Activated T-helper 1 cell treated with anti-CD3 and anti-CD28 coated beads, Interleukin-12 subunit alpha, Interleukin-12 subunit beta, Interleukin-2, Interleukin-4 antibody, amounts not matched to agents 30 ng/mL and 10 ng/mL and 1 ng/mL, durations not matched to agents 14 hours and 24 hours and 36 hours (primary cell): ENCODE measurements at regions of chr1 and their contacts with region 1.

Region 1: GRCh38 chr1:116737020-116737854 is 17.0 kb upstream of the CD2 start:
- DNase-seq: peak; percentile 70
- H3K4me3 Mint-ChIP-seq: peak overlapping the region; percentile 66
- H3K27ac Mint-ChIP-seq: peak overlapping the region; percentile 99
- H3K4me1 Mint-ChIP-seq: peaks cover 79% of the 10 kb centered on the region
- H3K27me3 Mint-ChIP-seq: no peaks in the 10 kb centered on the region

Region 2: GRCh38 chr1:116724765-116725375 is 12.4 kb before region 1 on chr1:
- intact Hi-C with region 1: loop called (anchors 1 kb)
- DNase-seq: peak; percentile 64
- H3K4me3 Mint-ChIP-seq: no peak overlapping the region
- H3K27ac Mint-ChIP-seq: no peak overlapping the region
- H3K4me1 Mint-ChIP-seq: peaks cover 43% of the 10 kb centered on the region
- H3K27me3 Mint-ChIP-seq: no peaks in the 10 kb centered on the region

Region 3: DNA sequence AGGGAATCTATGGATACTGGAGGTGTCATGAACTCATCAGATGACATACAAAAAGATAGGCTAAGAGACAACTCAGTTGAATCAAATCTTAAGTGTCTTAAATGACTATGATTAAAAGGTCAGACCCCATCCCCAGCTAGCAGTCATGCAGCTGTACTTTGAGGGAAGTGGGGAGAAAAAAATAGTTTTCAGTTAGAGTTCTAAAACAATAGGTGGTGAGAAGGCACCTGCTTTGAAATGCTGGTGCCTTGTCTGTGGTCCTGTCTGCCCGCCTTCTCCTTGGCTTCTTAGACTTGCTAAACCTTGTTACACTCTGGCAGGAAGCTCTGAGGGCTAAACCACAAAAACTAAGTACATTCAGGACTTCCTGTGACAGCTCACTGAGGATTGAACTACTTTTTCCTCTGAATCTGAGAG is 32.3 kb after region 1 on chr1:
- intact Hi-C with region 1: loop called (anchors 1 kb)
- DNase-seq: peak; percentile 77
- H3K4me3 Mint-ChIP-seq: peak overlapping the region; percentile 84
- H3K27ac Mint-ChIP-seq: peak overlapping the region; percentile 100
- H3K4me1 Mint-ChIP-seq: peaks cover 90% of the 10 kb centered on the region
- H3K27me3 Mint-ChIP-seq: peaks cover under 1% of the 10 kb centered on the region

Region 4: GRCh38 chr1:116909510-116910378 is 172.5 kb after region 1 on chr1 and contains the start of gene PTGFRN:
- intact Hi-C with region 1: loop called (anchors 1 kb)
- DNase-seq: no peak
- H3K4me3 Mint-ChIP-seq: peak within 1 kb of the TSS; percentile 87
- H3K27ac Mint-ChIP-seq: peak within 1 kb of the TSS; percentile 75
- H3K4me1 Mint-ChIP-seq: peaks cover 9% of the 10 kb centered on the region
- H3K27me3 Mint-ChIP-seq: peaks cover 4% of the 10 kb centered on the region
- total RNA-seq, gene PTGFRN: 38.0 and 43.4 TPM in 2 replicates

Region 5: GRCh38 chr1:117001254-117001927 is 264.2 kb after region 1 on chr1 and contains the start of gene CD101:
- intact Hi-C with region 1: loop called (anchors 1 kb)
- DNase-seq: no peak
- H3K4me3 Mint-ChIP-seq: peak within 1 kb of the TSS; percentile 3
- H3K27ac Mint-ChIP-seq: peak within 1 kb of the TSS; percentile 79
- H3K4me1 Mint-ChIP-seq: peaks cover 36% of the 10 kb centered on the region
- H3K27me3 Mint-ChIP-seq: peaks cover 3% of the 10 kb centered on the region
- total RNA-seq, gene CD101: 0.80 and 1.0 TPM in 2 replicates